Activated CD4-positive, alpha-beta memory T cell treated with anti-CD3 and anti-CD28 coated beads for 36 hours (primary cell): ENCODE measurements at regions of chr22 and their contacts with region 1.

Region 1: DNA sequence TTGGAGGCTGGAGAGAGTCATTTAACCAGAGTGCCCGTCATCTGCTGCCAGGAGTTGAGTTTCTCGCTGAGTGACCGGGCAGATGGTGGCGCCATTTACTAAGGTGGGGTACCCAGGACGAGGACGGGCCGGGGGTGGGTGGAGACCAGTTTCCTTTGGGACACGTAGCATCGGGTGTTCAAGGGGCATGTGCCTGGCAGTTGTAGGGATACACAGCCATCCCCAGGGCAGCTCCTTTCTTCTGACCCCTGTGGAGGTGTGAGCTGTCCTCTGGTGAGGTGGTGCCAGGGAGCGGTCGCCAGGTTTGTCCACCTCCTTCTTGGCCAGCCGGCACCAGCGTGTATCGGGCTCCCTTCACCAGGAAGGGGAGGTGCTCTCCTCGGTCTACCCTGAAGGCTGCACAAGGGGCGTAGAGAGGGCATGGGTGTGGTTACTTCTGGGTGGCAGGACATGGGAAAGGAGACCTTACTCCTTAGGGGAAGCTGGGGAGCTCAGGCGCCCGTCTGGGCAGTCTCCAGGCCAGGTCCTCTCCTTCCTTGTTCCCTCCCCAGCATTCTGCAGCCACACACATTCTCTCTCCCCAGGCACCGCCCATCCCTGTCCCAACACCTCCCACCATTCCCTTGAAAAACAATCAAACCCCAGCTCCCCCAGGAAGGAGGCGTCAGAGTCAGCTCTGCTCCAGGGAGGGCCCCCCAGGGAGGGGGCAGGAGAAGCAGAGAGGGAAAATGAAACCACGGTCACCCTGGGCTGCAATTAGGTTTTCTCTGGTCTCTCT is 10.3 kb upstream of the MB start:
- DNase-seq: peak; percentile 82
- H3K4me3 Mint-ChIP-seq: peak overlapping the region; percentile 56
- H3K27ac Mint-ChIP-seq: peak overlapping the region; percentile 30
- H3K4me1 Mint-ChIP-seq: peaks cover 19% of the 10 kb centered on the region
- H3K27me3 Mint-ChIP-seq: peaks cover 3% of the 10 kb centered on the region

Region 2: GRCh38 chr22:35350539-35351503 is 276.6 kb before region 1 on chr22:
- CTCF ChIA-PET with region 1: interaction called, 9 read pairs
- POLR2A ChIA-PET with region 1: no interaction called
- intact Hi-C with region 1: loop called (anchors 1 kb)
- DNase-seq: peak; percentile 92
- H3K4me3 Mint-ChIP-seq: peak overlapping the region; percentile 71
- H3K27ac Mint-ChIP-seq: no peak overlapping the region
- H3K4me1 Mint-ChIP-seq: peaks cover 28% of the 10 kb centered on the region
- H3K27me3 Mint-ChIP-seq: no peaks in the 10 kb centered on the region

Region 3: DNA sequence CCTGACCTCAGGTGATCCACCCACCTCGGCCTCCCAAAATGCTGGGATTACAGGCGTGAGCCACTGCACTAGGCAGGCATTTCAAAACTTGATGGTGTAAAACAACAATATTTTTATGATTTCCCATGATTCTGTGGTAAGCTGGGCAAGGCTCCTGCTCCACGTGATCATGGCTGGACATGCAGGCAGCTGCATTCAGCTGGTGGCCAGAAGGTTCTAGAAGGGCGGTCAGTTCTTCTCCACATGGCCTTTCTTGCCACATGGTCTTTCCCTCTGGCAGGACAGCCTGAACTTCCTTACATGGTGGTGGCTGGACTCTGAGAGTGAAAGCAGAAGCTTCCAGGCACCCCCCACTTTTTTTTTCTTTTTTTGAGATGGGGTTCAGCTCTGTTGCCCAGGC is 96.8 kb before region 1 on chr22:
- CTCF ChIA-PET with region 1: no interaction called
- POLR2A ChIA-PET with region 1: no interaction called
- intact Hi-C with region 1: no loop called
- DNase-seq: no peak
- H3K4me3 Mint-ChIP-seq: no peak overlapping the region
- H3K27ac Mint-ChIP-seq: no peak overlapping the region
- H3K4me1 Mint-ChIP-seq: no peaks in the 10 kb centered on the region
- H3K27me3 Mint-ChIP-seq: no peaks in the 10 kb centered on the region

Region 4: DNA sequence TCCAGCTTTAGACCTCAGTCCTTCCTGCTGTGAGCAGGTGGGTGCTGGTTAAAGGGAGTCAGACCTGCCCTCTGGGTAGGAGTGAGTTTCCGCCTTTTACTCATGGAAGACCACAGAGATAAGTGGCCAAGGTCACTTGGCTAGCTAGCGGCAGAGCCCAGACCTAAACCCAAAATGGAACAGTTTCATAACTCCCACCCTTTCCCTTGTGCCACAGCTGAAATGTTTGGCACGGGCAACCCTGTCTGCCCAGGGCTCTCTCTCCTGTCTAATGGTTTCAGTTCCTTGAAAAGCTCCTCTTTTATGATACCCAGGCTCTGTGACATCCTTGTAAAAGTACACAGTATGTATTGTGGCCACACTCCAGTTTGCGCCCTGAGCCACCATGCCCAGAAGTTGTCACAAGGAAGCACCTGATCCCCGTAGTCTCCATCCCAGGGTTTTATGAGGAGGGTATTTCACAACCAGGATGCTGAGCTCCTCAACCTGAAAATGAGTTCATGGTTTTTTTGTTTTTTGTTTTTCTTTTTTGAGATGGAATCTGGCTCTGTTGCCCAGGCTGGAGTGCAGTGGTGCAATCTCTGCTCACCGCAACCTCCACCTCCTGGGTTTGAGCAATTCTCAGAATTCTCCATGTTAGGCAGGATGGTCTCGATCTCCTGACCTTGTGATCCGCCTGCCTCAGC is 15.4 kb before region 1 on chr22:
- CTCF ChIA-PET with region 1: interaction called, 10 read pairs
- POLR2A ChIA-PET with region 1: no interaction called
- intact Hi-C with region 1: no loop called
- DNase-seq: no peak
- H3K4me3 Mint-ChIP-seq: no peak overlapping the region
- H3K27ac Mint-ChIP-seq: no peak overlapping the region
- H3K4me1 Mint-ChIP-seq: peaks cover 20% of the 10 kb centered on the region
- H3K27me3 Mint-ChIP-seq: peaks cover 10% of the 10 kb centered on the region

Region 5: DNA sequence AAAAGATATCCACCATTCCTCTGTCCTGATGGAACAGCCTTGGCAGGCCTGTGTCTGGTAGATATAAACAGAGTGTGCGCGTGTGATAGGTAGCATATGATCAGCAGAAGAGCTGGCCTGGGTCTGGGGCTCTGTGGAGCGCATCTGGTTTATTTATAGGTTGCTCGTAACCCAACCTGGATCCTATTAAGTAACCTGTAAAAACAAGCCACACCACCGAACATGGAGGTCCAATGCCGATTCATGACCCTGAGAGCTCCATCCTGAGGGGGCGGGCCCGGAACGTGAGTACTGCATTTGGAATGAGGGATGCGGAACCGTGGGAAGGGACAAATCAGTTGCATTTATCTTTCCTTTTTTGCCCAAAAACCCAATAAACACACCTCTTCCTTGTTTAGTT is 58.3 kb after region 1 on chr22:
- CTCF ChIA-PET with region 1: interaction called, 4 read pairs
- POLR2A ChIA-PET with region 1: no interaction called
- intact Hi-C with region 1: loop called (anchors 5 kb)
- DNase-seq: no peak
- H3K4me3 Mint-ChIP-seq: no peak overlapping the region
- H3K27ac Mint-ChIP-seq: no peak overlapping the region
- H3K4me1 Mint-ChIP-seq: peaks cover 2% of the 10 kb centered on the region
- H3K27me3 Mint-ChIP-seq: no peaks in the 10 kb centered on the region

Region 6: DNA sequence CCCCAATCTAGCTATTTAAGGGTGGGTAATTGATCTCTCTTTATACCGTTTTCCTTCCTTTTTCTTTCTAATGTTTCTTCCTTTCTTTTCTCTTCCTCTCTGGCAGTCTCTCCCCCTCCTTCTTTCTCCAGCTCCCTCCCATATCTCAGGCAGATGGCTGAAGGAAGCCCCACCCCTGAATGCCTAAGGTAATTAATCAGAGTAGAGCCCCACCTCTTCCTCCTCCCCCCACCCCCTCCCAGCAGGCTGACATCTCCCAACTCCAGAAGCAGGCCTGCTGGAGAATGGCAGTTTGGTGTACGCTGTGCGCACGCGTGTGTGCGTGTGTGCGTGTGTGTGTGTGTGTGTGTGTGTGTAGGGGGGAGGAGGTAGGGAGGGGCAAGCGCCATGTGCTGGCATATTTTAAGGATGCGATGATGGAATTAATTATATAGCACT is 212.9 kb after region 1 on chr22:
- CTCF ChIA-PET with region 1: interaction called, 4 read pairs
- POLR2A ChIA-PET with region 1: no interaction called
- intact Hi-C with region 1: loop called (anchors 5 kb)
- DNase-seq: no peak
- H3K4me3 Mint-ChIP-seq: no peak overlapping the region
- H3K27ac Mint-ChIP-seq: no peak overlapping the region
- H3K4me1 Mint-ChIP-seq: peaks cover 14% of the 10 kb centered on the region
- H3K27me3 Mint-ChIP-seq: peaks cover 14% of the 10 kb centered on the region

Region 7: DNA sequence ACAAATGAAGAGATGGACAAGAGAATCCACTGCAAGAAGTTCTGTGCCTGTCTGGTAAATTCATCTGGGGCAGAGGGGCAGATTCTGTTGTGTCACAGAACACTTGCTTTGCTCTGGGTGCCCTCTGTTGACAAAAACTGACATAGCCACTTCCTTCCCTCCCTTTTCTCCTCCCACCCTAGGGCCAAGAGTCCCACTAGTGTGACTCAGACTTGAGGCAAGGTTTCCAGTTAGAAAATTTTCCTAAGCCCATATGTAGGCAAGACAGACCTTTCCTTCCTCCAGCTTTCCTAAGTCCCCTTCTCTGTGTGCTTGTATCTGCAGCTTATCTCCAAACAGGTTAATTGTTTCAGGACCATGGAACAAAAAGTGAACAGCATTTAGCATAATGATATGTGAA is 294.3 kb after region 1 on chr22:
- CTCF ChIA-PET with region 1: interaction called, 17 read pairs
- POLR2A ChIA-PET with region 1: no interaction called
- intact Hi-C with region 1: loop called (anchors 1 kb)
- DNase-seq: peak; percentile 56
- H3K4me3 Mint-ChIP-seq: no peak overlapping the region
- H3K27ac Mint-ChIP-seq: no peak overlapping the region
- H3K4me1 Mint-ChIP-seq: peaks cover 3% of the 10 kb centered on the region
- H3K27me3 Mint-ChIP-seq: peaks cover 4% of the 10 kb centered on the region

Region 8: DNA sequence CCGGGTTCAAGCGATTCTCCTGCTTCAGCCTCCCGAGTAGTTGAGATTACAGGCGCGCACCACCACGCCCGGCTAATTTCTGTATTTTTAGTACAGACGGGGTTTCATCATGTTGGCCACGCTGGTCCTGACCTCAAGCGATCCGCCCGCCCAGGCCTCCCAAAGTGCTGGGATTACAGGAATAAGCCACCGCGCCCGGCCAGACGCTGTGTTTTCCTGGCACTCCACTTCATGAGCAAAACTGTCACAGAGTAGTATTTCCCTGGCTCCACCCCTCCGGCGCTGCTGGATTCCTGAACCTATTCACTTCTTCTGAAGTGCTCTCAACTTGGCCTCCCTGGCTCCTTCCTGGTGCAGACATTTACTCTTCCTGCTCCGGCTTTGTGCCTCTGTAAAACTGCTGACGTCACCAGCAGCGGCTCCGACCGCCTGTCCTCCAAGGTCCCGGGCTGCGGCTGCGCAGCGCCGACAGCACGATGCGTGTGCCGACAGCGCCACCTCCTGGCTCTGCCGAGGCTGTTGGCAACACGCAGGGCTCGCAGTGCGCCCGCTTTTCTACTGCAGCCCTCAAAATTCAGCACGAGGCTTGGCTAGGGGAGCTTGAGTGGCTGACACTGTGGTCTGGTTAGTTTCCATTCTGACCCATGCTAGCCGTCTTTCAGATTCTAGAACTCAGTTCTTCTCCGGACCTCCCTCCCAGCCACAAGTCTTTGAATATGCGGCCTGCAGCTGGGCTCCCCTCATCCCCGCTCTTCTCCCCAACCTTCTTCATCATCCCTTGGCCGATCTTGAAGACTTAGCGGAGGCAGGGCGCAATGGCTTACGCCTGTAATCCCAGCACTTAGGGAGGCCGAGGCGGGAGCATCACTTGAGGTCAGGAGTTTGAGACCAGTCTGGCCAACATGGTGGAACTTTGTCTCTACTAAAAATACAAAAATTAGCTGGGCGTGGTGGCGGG is 496.5 kb after region 1 on chr22:
- CTCF ChIA-PET with region 1: interaction called, 3 read pairs
- POLR2A ChIA-PET with region 1: no interaction called
- intact Hi-C with region 1: loop called (anchors 1 kb)
- DNase-seq: peak; percentile 95
- H3K4me3 Mint-ChIP-seq: peak overlapping the region; percentile 66
- H3K27ac Mint-ChIP-seq: peak overlapping the region; percentile 67
- H3K4me1 Mint-ChIP-seq: peaks cover 12% of the 10 kb centered on the region
- H3K27me3 Mint-ChIP-seq: no peaks in the 10 kb centered on the region